Natural killer cell (primary cell): ENCODE measurements at regions of chr2 and their contacts with region 1.

Region 1: DNA sequence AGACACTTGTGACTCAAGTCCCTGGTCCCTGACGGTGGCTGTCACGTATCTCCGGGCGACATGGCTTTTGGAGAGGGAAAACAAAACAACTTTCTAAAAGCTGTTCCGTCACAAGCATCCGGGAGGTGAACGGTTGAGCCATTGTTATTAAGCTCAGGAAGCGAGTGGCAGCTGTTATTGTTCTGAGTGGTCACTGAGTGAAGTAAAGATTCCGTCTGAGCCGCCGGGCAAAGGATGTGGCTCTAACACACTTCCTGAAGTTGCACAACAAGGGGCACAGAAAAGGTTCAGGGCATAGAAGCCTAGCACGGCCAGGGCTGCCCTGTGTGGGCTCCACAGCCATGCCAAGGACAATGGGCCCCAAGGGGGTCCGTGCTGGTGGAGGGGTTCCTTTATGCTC is 24.3 kb downstream of the INPP5D start:
- DNase-seq: peak; percentile 64 to 74
- ATAC-seq: peak; percentile 61 to 81 (median 76)
- H3K4me3 ChIP-seq: peak overlapping the region; percentile 3
- H3K4me3 Mint-ChIP-seq: peak overlapping the region; percentile 89
- H3K27ac ChIP-seq: peak overlapping the region; percentile 85
- H3K27ac Mint-ChIP-seq: no peak overlapping the region
- H3K4me1 ChIP-seq: peaks cover 98% of the 10 kb centered on the region
- H3K4me1 Mint-ChIP-seq: peaks cover 94 to 96% of the 10 kb centered on the region in 2 donors
- H3K27me3 ChIP-seq: no peaks in the 10 kb centered on the region
- H3K27me3 Mint-ChIP-seq: no peaks in the 10 kb centered on the region
- CTCF ChIP-seq: no peak

Region 2: GRCh38 chr2:233100192-233100998 is 15.9 kb after region 1 on chr2:
- intact Hi-C with region 1: loop called (anchors 1 kb)
- DNase-seq: peak; percentile 70 to 91
- ATAC-seq: peak; percentile 70 to 84 (median 78)
- H3K4me3 ChIP-seq: peak overlapping the region; percentile 4
- H3K4me3 Mint-ChIP-seq: peak overlapping the region; percentile 83
- H3K27ac ChIP-seq: peak overlapping the region; percentile 88
- H3K27ac Mint-ChIP-seq: peak overlapping the region; percentile 98 to 99
- H3K4me1 ChIP-seq: peaks cover 73% of the 10 kb centered on the region
- H3K4me1 Mint-ChIP-seq: peaks cover 80 to 84% of the 10 kb centered on the region in 2 donors
- H3K27me3 ChIP-seq: no peaks in the 10 kb centered on the region
- H3K27me3 Mint-ChIP-seq: no peaks in the 10 kb centered on the region
- CTCF ChIP-seq: no peak

Region 3: GRCh38 chr2:233480490-233481202 is 396.2 kb after region 1 on chr2:
- intact Hi-C with region 1: no loop called
- DNase-seq: no peak
- ATAC-seq: no peak
- H3K4me3 ChIP-seq: no peak overlapping the region
- H3K4me3 Mint-ChIP-seq: no peak overlapping the region
- H3K27ac ChIP-seq: no peak overlapping the region
- H3K27ac Mint-ChIP-seq: peak overlapping the region in 1 of 2 donors; percentile 69
- H3K4me1 ChIP-seq: no peaks in the 10 kb centered on the region
- H3K4me1 Mint-ChIP-seq: peaks cover 9% of the 10 kb centered on the region in 2 donors
- H3K27me3 ChIP-seq: no peaks in the 10 kb centered on the region
- H3K27me3 Mint-ChIP-seq: no peaks in the 10 kb centered on the region
- CTCF ChIP-seq: no peak

Region 4: DNA sequence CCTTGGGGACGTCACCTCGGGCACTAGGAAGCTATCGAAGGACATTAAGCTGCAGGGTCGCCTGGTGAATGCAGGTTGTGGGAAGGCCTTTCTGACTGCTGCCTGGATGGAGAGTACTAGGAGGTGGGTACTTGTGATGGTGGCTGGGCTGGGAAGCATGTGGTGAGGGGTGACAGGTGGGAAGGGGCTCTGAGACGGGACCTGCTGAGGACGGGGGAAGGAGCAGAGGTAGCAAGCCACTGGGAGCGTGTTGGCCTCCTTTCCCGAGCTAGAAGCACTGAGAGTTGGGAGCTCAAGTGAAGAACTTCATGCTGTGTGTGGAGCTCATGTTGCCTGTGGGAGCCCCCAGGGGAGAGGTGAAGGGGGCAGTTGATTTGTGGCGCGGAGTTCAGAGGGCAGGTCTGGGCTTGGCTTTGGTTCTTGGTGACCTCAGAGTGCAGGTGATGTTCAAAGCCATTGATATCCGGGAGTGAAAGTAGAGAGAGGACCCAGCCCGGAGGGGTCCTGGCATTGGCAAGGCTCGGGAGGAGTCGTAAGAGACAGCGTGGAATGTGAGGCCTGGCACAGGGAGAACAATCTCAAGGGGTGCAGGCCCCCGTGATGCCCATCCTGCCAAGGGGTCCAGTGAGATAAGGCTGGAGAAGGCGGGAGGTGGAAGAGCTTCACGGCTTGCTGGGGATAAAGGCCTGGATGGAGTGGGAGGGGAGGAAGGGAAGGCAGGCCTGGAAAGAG is 706.8 kb after region 1 on chr2:
- intact Hi-C with region 1: no loop called
- DNase-seq: no peak
- ATAC-seq: no peak
- H3K4me3 ChIP-seq: no peak overlapping the region
- H3K4me3 Mint-ChIP-seq: no peak overlapping the region
- H3K27ac ChIP-seq: no peak overlapping the region
- H3K27ac Mint-ChIP-seq: no peak overlapping the region
- H3K4me1 ChIP-seq: no peaks in the 10 kb centered on the region
- H3K4me1 Mint-ChIP-seq: no peaks in the 10 kb centered on the region
- H3K27me3 ChIP-seq: no peaks in the 10 kb centered on the region
- H3K27me3 Mint-ChIP-seq: peaks cover 2 to 4% of the 10 kb centered on the region in 2 donors
- CTCF ChIP-seq: no peak